ENCODE measurements at regions of chr1 and their contacts with region 1.

Region 1: DNA sequence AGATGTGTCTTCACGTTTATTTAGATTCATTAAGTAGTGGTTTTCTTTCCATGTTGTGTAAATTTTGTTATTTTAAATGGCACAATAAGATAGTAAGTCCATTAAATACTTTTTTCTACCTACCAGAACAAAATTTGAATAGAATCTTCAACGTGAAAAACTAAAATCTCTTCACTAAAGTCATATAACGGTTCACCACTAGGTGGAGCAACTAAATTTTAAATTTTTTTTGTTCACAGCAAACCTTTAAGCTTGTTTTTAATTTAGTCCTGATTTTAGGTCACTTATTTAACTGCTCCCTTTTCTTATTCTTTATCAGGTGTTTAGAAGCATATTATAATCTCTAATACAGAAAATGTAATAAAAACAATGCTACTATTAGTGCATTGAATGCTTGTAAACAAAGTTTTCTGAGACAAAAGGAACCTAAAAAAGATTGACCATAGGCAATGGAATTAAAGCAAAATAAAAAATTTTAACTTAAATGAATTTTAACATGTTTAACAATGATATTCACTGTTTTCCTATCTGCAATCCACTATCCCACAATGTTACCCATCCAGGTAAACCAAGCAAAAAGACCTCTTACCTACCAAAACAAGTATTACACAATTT is 28.3 kb upstream of the PKN2 start:
- DNase-seq: peak; percentile 1
- H3K4me3 ChIP-seq: no peak overlapping the region
- H3K27me3 ChIP-seq: no peaks in the 10 kb centered on the region
- CTCF ChIP-seq: peak; percentile 57

Region 2: GRCh38 chr1:88549536-88549935 is 106.3 kb before region 1 on chr1:
- CTCF ChIA-PET with region 1: no interaction called
- POLR2A ChIA-PET with region 1: no interaction called
- DNase-seq: no peak
- H3K4me3 ChIP-seq: no peak overlapping the region
- H3K27me3 ChIP-seq: no peaks in the 10 kb centered on the region
- CTCF ChIP-seq: peak; percentile 26; the same call in 1 of the 2 replicates

Region 3: GRCh38 chr1:88668405-88668804 is 12.6 kb after region 1 on chr1:
- CTCF ChIA-PET with region 1: interaction called, 14 read pairs
- POLR2A ChIA-PET with region 1: no interaction called
- DNase-seq: no peak
- H3K4me3 ChIP-seq: no peak overlapping the region
- H3K27me3 ChIP-seq: no peaks in the 10 kb centered on the region
- CTCF ChIP-seq: no peak

Region 4: GRCh38 chr1:88730132-88730675 is 74.4 kb after region 1 on chr1:
- CTCF ChIA-PET with region 1: no interaction called
- POLR2A ChIA-PET with region 1: no interaction called
- DNase-seq: no peak
- H3K4me3 ChIP-seq: no peak overlapping the region
- H3K27me3 ChIP-seq: no peaks in the 10 kb centered on the region
- CTCF ChIP-seq: no peak

Measured in BJ (cell line).